A549 (cell line): ENCODE measurements at regions of chr9 and their contacts with region 1.

Region 1: DNA sequence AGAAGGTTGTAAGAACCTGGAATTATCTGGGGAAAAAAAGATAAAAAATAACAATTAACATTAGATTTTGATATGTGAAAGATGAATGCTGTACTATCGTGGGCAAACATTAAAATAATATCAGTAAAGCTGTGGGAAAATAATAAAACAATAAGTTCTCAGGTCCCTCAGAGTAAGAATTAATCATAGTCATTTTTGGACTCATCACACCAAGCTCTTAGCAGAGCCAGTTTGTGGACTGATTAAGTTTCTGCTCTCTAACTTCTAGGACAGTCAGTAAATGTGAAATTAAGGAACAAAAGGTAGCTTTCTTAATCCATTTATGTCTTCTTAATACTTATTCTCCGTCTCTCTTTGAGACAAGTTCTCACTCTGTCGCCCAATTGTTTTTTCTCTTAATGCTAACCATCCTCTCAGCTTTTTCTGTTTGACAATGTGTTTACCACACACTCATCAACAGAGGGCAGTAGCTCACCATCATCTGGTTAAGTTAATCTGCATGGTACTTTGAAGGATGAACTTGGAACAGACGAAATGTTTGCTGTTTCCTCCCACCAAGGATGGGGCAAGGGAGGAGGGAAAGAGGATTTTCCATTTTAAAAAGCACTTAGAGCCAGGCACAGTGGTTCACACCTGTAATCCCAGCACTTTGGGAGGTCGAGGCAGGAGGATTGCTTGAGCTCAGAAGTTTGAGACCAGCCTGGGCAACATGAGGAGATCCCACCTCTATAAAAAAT is 5.3 kb upstream of the ACO1 start:
- DNase-seq: peak; percentile 76 to 82
- ATAC-seq: peak; percentile 78 to 87
- H3K4me3 ChIP-seq: no peak overlapping the region
- H3K27ac ChIP-seq: no peak overlapping the region
- H3K4me1 ChIP-seq: peaks cover 5% of the 10 kb centered on the region; the same call in 2 of the 3 replicates
- CTCF ChIP-seq: peak; percentile 90
- EP300 ChIP-seq: no peak
- POLR2A ChIP-seq: no peak
- RAD21 ChIP-seq: peak; percentile 89 to 96

Region 2: DNA sequence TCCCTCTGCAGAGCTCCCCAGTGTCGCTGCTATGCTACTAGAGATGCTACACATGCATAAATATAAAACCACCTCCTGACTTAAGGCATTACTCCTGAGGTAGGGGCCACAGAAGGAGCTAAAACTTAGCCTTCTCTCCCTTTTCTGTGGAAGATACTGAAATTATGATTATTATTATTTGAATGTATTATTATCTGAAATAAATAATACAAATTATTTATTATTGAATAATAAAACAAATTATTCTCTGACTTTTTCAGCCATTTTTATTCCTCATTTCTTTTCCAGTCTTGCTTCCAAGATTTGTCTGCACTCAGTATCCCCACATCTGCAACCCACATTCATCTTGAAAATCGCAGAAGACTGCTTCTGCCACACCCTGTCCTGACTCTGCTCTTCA is 409.6 kb before region 1 on chr9:
- CTCF ChIA-PET with region 1: no interaction called
- POLR2A ChIA-PET with region 1: no interaction called
- DNase-seq: no peak
- ATAC-seq: no peak
- H3K4me3 ChIP-seq: no peak overlapping the region
- H3K27ac ChIP-seq: no peak overlapping the region
- H3K4me1 ChIP-seq: no peaks in the 10 kb centered on the region
- CTCF ChIP-seq: no peak
- EP300 ChIP-seq: no peak
- POLR2A ChIP-seq: no peak
- RAD21 ChIP-seq: no peak

Region 3: GRCh38 chr9:32011049-32011448 is 368.1 kb before region 1 on chr9:
- CTCF ChIA-PET with region 1: no interaction called
- POLR2A ChIA-PET with region 1: no interaction called
- DNase-seq: peak in 1 of 2 experiments; percentile 4
- ATAC-seq: no peak
- H3K4me3 ChIP-seq: no peak overlapping the region
- H3K27ac ChIP-seq: no peak overlapping the region
- H3K4me1 ChIP-seq: no peaks in the 10 kb centered on the region
- CTCF ChIP-seq: no peak
- EP300 ChIP-seq: no peak
- POLR2A ChIP-seq: no peak
- RAD21 ChIP-seq: no peak

Region 4: GRCh38 chr9:32431940-32432555 is 52.9 kb after region 1 on chr9:
- CTCF ChIA-PET with region 1: interaction called, 159 read pairs
- POLR2A ChIA-PET with region 1: no interaction called
- DNase-seq: peak; percentile 17 to 25
- ATAC-seq: peak; percentile 77 to 88; a peak in 5 of 6 replicates
- H3K4me3 ChIP-seq: no peak overlapping the region
- H3K27ac ChIP-seq: no peak overlapping the region
- H3K4me1 ChIP-seq: peaks cover 7% of the 10 kb centered on the region
- CTCF ChIP-seq: peak; percentile 59
- EP300 ChIP-seq: no peak
- POLR2A ChIP-seq: no peak
- RAD21 ChIP-seq: peak; percentile 36 to 42; a peak in 3 of 5 replicates

Region 5: DNA sequence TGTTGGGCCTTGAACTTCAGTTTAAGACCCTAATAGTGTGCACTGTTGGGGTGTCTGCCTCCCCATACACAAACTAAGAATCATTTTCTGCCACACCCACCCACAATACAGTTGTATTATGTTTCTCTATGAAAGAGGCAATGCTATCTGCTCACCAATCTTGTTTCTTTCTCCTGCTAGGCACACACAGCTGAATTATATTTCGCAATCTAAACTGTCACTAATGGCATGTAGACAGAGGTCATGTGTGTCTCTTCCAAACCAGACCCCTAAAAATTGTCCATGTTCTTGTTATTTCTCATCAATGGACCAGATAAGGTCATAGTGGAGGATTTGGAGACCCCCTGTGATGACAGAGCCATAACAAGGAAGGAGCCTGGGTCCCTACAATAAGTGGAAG is 89.6 kb after region 1 on chr9:
- CTCF ChIA-PET with region 1: interaction called, 13 read pairs
- POLR2A ChIA-PET with region 1: no interaction called
- DNase-seq: no peak
- ATAC-seq: no peak
- H3K4me3 ChIP-seq: no peak overlapping the region
- H3K27ac ChIP-seq: no peak overlapping the region
- H3K4me1 ChIP-seq: 0 out of 3 replicates have a peak, but pooled peaks cover 2% of the 10 kb centered on the region
- CTCF ChIP-seq: no peak
- EP300 ChIP-seq: no peak
- POLR2A ChIP-seq: no peak
- RAD21 ChIP-seq: no peak

Region 6: DNA sequence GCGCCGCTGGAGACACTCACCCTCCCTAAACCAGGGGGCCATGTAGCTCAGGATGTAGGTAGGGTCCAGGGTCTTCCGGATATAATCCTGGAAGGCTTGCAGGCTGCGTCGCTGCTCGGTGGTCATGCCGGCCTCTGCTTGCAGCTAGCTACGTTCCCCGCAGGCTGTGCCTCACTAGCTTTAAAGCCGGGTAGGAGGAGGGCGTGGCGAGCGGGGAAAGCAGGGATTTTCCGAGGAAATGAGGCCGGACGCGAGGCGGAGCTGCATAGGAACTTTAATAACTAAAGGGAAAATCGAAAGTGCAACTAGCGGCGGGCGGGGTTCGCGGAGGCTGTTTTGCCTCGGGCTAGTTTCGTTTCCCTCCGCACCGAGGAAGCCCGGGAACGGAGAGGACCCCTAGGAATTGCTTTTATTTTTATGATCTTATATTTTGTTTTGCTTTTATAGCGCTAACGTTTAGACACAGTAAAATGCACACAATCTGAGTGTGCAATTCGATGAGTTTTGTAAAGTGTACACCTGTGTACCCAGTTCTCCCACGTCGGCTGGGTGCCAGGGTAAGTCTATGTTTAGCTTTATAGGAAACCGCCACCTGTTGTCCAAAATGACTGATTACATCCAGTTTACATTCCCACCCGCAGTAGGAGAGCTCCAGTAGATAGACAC is 147.0 kb after region 1 on chr9 and contains the start of gene RIGI:
- CTCF ChIA-PET with region 1: interaction called, 159 read pairs
- POLR2A ChIA-PET with region 1: interaction called, 25 read pairs
- DNase-seq: peak; percentile 64 to 85
- ATAC-seq: peak; percentile 92 to 93
- H3K4me3 ChIP-seq: peak within 1 kb of the TSS; percentile 58
- H3K27ac ChIP-seq: peak within 1 kb of the TSS; percentile 46 to 83
- H3K4me1 ChIP-seq: peaks cover 6% of the 10 kb centered on the region; the same call in 2 of the 3 replicates
- CTCF ChIP-seq: peak; percentile 71
- EP300 ChIP-seq: no peak
- POLR2A ChIP-seq: 0 out of 2 replicates have a peak, but pooled peaks have one; percentile 19
- RAD21 ChIP-seq: peak; percentile 58 to 74
- polyA plus RNA-seq, gene RIGI: 3.9 and 4.8 TPM in 2 replicates

Region 7: GRCh38 chr9:32550562-32551433 is 171.6 kb after region 1 on chr9:
- CTCF ChIA-PET with region 1: interaction called, 91 read pairs
- POLR2A ChIA-PET with region 1: interaction called, 8 read pairs
- DNase-seq: peak; percentile 93 to 97
- ATAC-seq: peak; percentile 70 to 85
- H3K4me3 ChIP-seq: peak overlapping the region; percentile 62
- H3K27ac ChIP-seq: peak overlapping the region; percentile 94 to 96
- H3K4me1 ChIP-seq: peaks cover 17% of the 10 kb centered on the region
- CTCF ChIP-seq: no peak
- EP300 ChIP-seq: no peak
- POLR2A ChIP-seq: no peak; the same call in 1 of the 2 replicates
- RAD21 ChIP-seq: no peak

Region 8: DNA sequence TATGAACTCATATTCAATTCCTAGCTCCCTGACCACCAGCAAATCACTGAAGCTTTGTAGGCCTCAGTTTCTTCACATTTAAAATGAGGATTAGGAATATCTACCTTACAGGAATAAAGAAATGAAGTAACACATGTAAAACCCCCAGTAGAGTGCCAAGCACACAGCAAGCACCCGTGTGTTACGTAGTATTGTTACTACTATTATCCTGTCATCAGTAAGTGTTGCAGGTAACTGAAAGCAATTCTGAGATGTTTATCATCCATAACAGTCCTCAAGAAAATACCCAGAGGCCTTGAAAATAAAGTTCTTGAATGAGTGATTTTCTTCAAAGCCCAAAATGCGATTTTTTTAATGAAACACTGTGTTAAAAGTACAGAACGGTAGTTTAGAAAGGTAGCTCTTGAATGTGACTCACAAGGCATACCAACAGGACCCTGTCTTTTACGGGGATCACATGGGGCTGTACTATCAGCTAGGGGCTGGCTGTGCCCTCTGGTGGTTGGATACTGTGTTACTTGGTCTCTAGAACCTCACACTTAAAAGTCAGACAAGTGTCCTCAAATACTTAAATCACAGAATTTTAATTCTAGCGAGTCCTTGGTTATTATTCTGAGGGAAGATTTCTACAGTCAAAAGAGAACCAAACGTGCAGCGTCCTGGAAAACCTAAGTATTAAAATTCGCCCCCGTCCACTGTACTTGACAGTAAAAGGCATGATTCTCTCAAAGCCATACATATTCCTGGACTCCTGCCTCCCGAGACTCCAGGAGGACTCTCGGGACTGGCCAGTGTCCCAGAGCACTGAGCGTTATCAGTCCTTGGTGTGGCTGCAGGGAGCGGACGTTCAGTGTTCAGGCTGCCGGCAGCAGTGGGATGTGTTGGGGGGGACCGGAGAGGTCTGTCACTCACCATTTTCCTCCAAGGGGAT is 193.1 kb after region 1 on chr9:
- CTCF ChIA-PET with region 1: interaction called, 507 read pairs
- POLR2A ChIA-PET with region 1: interaction called, 14 read pairs
- DNase-seq: peak; percentile 79 to 89
- ATAC-seq: peak; percentile 95 to 96
- H3K4me3 ChIP-seq: peak overlapping the region; percentile 90
- H3K27ac ChIP-seq: peak overlapping the region; percentile 79 to 92
- H3K4me1 ChIP-seq: peaks cover 17% of the 10 kb centered on the region
- CTCF ChIP-seq: peak; percentile 67
- EP300 ChIP-seq: no peak
- POLR2A ChIP-seq: no peak
- RAD21 ChIP-seq: peak; percentile 55 to 64

Region 9: DNA sequence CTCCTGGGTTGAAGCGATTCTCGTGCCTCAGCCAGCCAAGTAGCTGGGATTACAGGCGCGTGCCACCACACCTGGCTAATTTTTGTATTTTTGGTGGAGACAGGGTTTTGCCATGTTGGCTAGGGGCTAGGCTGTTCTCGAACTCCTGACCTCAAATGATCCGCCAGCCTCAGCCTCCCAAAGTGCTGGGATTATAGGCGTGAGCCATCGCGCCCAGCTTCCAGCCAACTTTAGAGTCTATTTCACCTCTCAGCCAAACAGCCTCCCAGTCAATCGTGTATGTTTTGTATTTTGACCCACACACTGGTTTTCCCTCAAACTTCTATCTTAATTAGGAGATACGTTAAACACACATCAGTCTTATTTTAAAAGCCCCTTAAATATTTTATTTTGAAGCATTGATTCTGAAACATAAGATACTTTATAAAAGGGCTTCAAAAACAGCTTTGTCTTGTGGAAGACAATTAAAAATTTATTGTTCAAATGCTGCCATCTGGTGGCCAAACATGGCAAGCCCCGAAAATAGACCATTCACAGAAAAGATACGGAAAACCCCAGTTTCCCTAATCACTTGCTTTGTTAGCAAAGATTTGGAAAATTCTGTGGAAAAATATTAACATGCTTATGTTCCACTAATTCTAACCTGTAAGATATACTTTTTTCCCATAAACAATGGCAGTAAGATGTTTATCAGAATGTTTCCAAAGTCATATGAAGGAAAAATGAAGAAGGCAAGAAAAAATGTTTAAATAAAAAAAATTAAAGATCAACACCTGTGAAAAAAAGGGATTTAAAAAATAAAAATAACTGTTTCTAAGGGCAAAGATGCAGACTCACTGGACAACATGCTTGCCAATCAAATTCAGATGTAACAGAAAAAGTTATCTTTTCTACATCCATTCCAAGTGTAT is 589.2 kb after region 1 on chr9:
- CTCF ChIA-PET with region 1: interaction called, 108 read pairs
- POLR2A ChIA-PET with region 1: interaction called, 6 read pairs
- DNase-seq: peak; percentile 30 to 33
- ATAC-seq: peak in 1 of 2 experiments; percentile 63; a peak in 3 of 6 replicates
- H3K4me3 ChIP-seq: no peak overlapping the region
- H3K27ac ChIP-seq: no peak overlapping the region
- H3K4me1 ChIP-seq: no peaks in the 10 kb centered on the region
- CTCF ChIP-seq: peak; percentile 90
- EP300 ChIP-seq: no peak
- POLR2A ChIP-seq: no peak
- RAD21 ChIP-seq: peak; percentile 82 to 85